MCF 10A (cell line): ENCODE measurements at regions of chr9 and their contacts with region 1.

Region 1: DNA sequence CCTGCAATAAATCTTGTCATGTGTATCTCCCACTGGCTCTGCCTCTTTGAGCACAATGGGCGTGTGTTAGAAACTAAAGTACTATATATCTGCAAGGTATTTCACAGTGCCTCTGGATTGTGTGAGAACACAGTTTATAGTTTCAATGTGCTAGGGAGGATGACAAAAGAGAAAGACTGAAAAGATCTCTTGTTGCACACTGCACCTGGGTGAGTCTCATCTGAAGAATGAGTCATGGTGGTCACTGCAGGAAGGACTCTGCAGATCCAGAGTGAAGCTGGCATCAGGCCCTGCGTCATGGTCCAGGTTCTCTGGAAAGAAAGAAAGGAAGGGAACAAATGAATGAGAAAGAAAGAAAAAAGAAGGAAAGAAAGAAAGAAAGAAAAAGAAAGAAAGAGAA is 20.7 kb upstream of the CTSV start:
- DNase-seq: peak; percentile 80
- H3K4me3 Mint-ChIP-seq: no peak overlapping the region
- H3K27ac Mint-ChIP-seq: peak overlapping the region; percentile 10
- H3K4me1 Mint-ChIP-seq: peaks cover 6% of the 10 kb centered on the region
- H3K27me3 Mint-ChIP-seq: no peaks in the 10 kb centered on the region
- CTCF ChIP-seq: no peak

Region 2: GRCh38 chr9:97046223-97046622 is 13.4 kb before region 1 on chr9:
- CTCF ChIA-PET with region 1: interaction called, 4 read pairs
- POLR2A ChIA-PET with region 1: interaction called, 19 read pairs
- intact Hi-C with region 1: no loop called
- DNase-seq: peak; percentile 96
- H3K4me3 Mint-ChIP-seq: no peak overlapping the region
- H3K27ac Mint-ChIP-seq: peak overlapping the region; percentile 54
- H3K4me1 Mint-ChIP-seq: peaks cover 9% of the 10 kb centered on the region
- H3K27me3 Mint-ChIP-seq: no peaks in the 10 kb centered on the region
- CTCF ChIP-seq: no peak

Region 3: GRCh38 chr9:97136421-97136820 is 76.8 kb after region 1 on chr9:
- CTCF ChIA-PET with region 1: no interaction called
- POLR2A ChIA-PET with region 1: no interaction called
- intact Hi-C with region 1: no loop called
- DNase-seq: no peak
- H3K4me3 Mint-ChIP-seq: no peak overlapping the region
- H3K27ac Mint-ChIP-seq: no peak overlapping the region
- H3K4me1 Mint-ChIP-seq: no peaks in the 10 kb centered on the region
- H3K27me3 Mint-ChIP-seq: no peaks in the 10 kb centered on the region
- CTCF ChIP-seq: no peak

Region 4: GRCh38 chr9:97411789-97412625 is 352.3 kb after region 1 on chr9 and contains the start of gene TDRD7:
- CTCF ChIA-PET with region 1: no interaction called
- POLR2A ChIA-PET with region 1: no interaction called
- intact Hi-C with region 1: no loop called
- DNase-seq: peak; percentile 75
- H3K4me3 Mint-ChIP-seq: peak within 1 kb of the TSS; percentile 75
- H3K27ac Mint-ChIP-seq: peak within 1 kb of the TSS; percentile 81
- H3K4me1 Mint-ChIP-seq: peaks cover 12% of the 10 kb centered on the region
- H3K27me3 Mint-ChIP-seq: peaks cover 27% of the 10 kb centered on the region
- CTCF ChIP-seq: peak; percentile 96
- total RNA-seq, gene TDRD7: 7.1 and 8.2 TPM in 2 replicates